Activated CD4-positive, alpha-beta T cell treated with anti-CD3 and anti-CD28 coated beads for 36 hours (primary cell): ENCODE measurements at regions of chr14 and their contacts with region 1.

Region 1: GRCh38 chr14:22497144-22497423 is 91.9 kb downstream of the DAD1 start:
- DNase-seq: no peak
- ATAC-seq: no peak
- H3K4me3 Mint-ChIP-seq: peak overlapping the region; percentile 84
- H3K27ac Mint-ChIP-seq: peak overlapping the region; percentile 99
- H3K4me1 Mint-ChIP-seq: peaks cover 8% of the 10 kb centered on the region
- H3K27me3 Mint-ChIP-seq: no peaks in the 10 kb centered on the region

Region 2: DNA sequence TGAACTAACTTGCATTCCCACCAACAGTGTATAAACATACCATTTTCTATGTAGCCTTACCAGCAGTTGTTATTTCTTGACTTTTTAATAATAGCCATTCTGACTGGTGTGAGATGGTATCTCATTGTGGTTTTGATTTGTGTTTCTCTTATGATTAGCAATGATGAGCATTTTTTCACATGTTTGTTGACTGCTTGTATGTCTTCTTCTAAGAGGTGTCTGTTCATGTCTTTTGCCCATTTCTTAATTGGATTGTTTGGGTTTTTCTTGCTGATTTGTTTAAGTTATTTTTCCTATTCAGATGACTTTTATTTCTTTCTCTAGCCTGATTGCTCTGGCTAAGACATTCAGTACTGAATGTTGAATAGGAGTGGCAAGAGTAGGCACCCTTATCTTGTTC is 138.4 kb before region 1 on chr14:
- CTCF ChIA-PET with region 1: no interaction called
- POLR2A ChIA-PET with region 1: no interaction called
- intact Hi-C with region 1: no loop called
- DNase-seq: no peak
- ATAC-seq: no peak
- H3K4me3 Mint-ChIP-seq: no peak overlapping the region
- H3K27ac Mint-ChIP-seq: no peak overlapping the region
- H3K4me1 Mint-ChIP-seq: no peaks in the 10 kb centered on the region
- H3K27me3 Mint-ChIP-seq: no peaks in the 10 kb centered on the region

Region 3: GRCh38 chr14:22460461-22461195 is 36.5 kb before region 1 on chr14:
- CTCF ChIA-PET with region 1: no interaction called
- POLR2A ChIA-PET with region 1: no interaction called
- intact Hi-C with region 1: no loop called
- DNase-seq: no peak
- ATAC-seq: no peak
- H3K4me3 Mint-ChIP-seq: no peak overlapping the region
- H3K27ac Mint-ChIP-seq: no peak overlapping the region
- H3K4me1 Mint-ChIP-seq: no peaks in the 10 kb centered on the region
- H3K27me3 Mint-ChIP-seq: no peaks in the 10 kb centered on the region

Region 4: GRCh38 chr14:22531451-22532344 is 34.6 kb after region 1 on chr14:
- CTCF ChIA-PET with region 1: interaction called, 4 read pairs
- POLR2A ChIA-PET with region 1: interaction called, 3 read pairs
- intact Hi-C with region 1: loop called in 1 of 2 experiments (anchors 5 kb)
- DNase-seq: peak; percentile 60
- ATAC-seq: peak; percentile 70
- H3K4me3 Mint-ChIP-seq: peak overlapping the region; percentile 84
- H3K27ac Mint-ChIP-seq: peak overlapping the region; percentile 100
- H3K4me1 Mint-ChIP-seq: peaks cover 87% of the 10 kb centered on the region
- H3K27me3 Mint-ChIP-seq: no peaks in the 10 kb centered on the region